ENCODE measurements at regions of chr5 and their contacts with region 1.

Region 1: DNA sequence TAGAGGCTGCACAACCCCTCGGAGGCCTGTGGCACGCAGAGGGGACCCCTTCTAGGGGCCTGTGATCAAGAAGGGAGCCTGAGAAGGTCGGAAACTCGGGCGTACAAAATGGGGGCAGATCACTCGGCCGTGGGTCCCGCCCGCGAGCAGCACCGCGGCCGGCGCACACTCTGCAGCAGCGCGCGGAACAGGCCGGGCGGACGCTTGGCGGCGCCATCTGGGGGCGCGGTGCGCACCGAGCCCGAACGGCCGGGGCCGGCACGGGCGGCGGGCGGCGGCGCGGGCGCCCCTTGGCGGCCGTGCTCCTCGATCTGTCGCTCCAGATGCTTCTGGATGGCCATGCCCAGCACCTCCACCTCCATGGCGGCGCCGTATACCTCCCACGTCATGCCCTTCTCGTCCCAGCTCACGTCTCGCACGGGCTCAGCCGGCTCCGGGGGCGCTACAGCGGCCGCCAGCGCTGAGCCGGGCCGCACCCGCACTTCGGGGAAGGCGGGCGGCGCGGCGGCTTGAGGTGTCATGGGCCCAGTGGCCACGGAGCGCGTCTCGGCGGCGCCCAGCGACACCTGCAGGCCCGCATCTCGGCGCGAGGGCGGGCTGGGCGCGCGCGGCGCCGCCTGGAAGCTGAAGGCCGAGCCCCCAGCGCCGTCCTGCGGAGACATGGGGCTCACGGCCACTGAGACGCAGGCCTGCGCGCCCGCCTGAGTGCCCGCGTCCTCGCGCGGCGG is 13.1 kb downstream of the GPRIN1 start:
- DNase-seq: peak in 1 of 2 experiments; percentile 78
- H3K4me3 ChIP-seq: peak overlapping the region in 3 of 4 experiments; percentile 10 to 55 (median 21); a peak in 4 of 8 replicates
- H3K27ac ChIP-seq: no peak overlapping the region
- H3K4me1 ChIP-seq: 0 out of 7 replicates have a peak, but pooled peaks cover 0 to 2% (median 0%) of the 10 kb centered on the region in 4 experiments
- H3K27me3 ChIP-seq: peaks cover 0 to 19% (median 7%) of the 10 kb centered on the region in 4 experiments; a peak in 4 of 7 replicates
- CTCF ChIP-seq: peak in 2 of 3 experiments; percentile 54 to 75; a peak in 3 of 4 replicates
- EP300 ChIP-seq: no peak
- POLR2A ChIP-seq: no peak
- RAD21 ChIP-seq: peak in 1 of 2 experiments; percentile 33; a peak in 3 of 4 replicates

Region 2: GRCh38 chr5:176583081-176583480 is 13.8 kb before region 1 on chr5:
- CTCF ChIA-PET with region 1: interaction called, 29 read pairs
- POLR2A ChIA-PET with region 1: interaction called, 4 read pairs
- DNase-seq: no peak
- H3K4me3 ChIP-seq: no peak overlapping the region
- H3K27ac ChIP-seq: no peak overlapping the region
- H3K4me1 ChIP-seq: peaks cover 0 to 1% (median under 1%) of the 10 kb centered on the region in 4 experiments; a peak in 1 of 7 replicates
- H3K27me3 ChIP-seq: no peaks in the 10 kb centered on the region; a peak in 1 of 7 replicates
- CTCF ChIP-seq: no peak
- EP300 ChIP-seq: no peak
- POLR2A ChIP-seq: no peak
- RAD21 ChIP-seq: no peak

Region 3: GRCh38 chr5:176609724-176610434 is 13.0 kb after region 1 on chr5 and contains the start of gene GPRIN1:
- CTCF ChIA-PET with region 1: interaction called, 37 read pairs
- POLR2A ChIA-PET with region 1: interaction called, 3 read pairs
- DNase-seq: peak in 1 of 2 experiments; percentile 83
- H3K4me3 ChIP-seq: peak within 1 kb of the TSS; percentile 46 to 70 (median 65)
- H3K27ac ChIP-seq: no peak within 1 kb of the TSS
- H3K4me1 ChIP-seq: peaks cover 0 to 8% (median 5%) of the 10 kb centered on the region in 4 experiments; a peak in 5 of 7 replicates
- H3K27me3 ChIP-seq: peaks cover 0 to 14% (median 10%) of the 10 kb centered on the region in 4 experiments; a peak in 5 of 7 replicates
- CTCF ChIP-seq: peak in 2 of 3 experiments; percentile 24 to 81; a peak in 3 of 4 replicates
- EP300 ChIP-seq: no peak
- POLR2A ChIP-seq: no peak
- RAD21 ChIP-seq: peak; percentile 22 to 55; a peak in 3 of 4 replicates
- total RNA-seq, gene GPRIN1: 12.0 and 12.8 TPM in 2 replicates

Region 4: DNA sequence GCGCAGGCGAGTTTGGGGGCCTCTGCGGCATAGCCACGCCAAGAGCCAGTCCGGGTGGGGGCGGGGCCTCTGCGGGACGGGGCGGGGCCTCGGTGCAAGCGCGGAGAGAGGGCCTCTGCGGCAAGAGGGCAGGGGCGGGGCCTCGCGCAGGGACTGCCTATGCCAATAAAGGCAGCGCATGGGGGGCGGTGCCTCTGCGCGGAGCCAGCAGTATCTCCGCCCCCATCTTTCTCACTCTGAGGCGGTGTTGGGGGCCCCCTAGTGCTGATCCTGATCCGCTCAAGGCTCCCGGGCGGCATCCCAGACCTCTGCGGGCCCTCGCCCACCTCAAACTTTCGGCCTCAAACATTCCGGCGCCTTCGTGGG is 22.3 kb after region 1 on chr5:
- CTCF ChIA-PET with region 1: interaction called, 10 read pairs
- POLR2A ChIA-PET with region 1: no interaction called
- DNase-seq: peak; percentile 86 to 94
- H3K4me3 ChIP-seq: peak overlapping the region in 3 of 4 experiments; percentile 11 to 54 (median 19); a peak in 4 of 8 replicates
- H3K27ac ChIP-seq: no peak overlapping the region
- H3K4me1 ChIP-seq: peaks cover 0 to 13% (median 6%) of the 10 kb centered on the region in 4 experiments; a peak in 6 of 7 replicates
- H3K27me3 ChIP-seq: peaks cover 9 to 47% (median 26%) of the 10 kb centered on the region in 4 experiments; a peak in 6 of 7 replicates
- CTCF ChIP-seq: peak in 2 of 3 experiments; percentile 61 to 70; a peak in 3 of 4 replicates
- EP300 ChIP-seq: no peak
- POLR2A ChIP-seq: no peak
- RAD21 ChIP-seq: peak; percentile 61 to 78

Measured in H1 (cell line).